Activated CD4-positive, alpha-beta memory T cell treated with anti-CD3 and anti-CD28 coated beads, Interleukin-2, amount 10 ng/mL, durations not matched to agents 7 days and 5 days (primary cell): ENCODE measurements at regions of chr16 and their contacts with region 1.

Region 1: DNA sequence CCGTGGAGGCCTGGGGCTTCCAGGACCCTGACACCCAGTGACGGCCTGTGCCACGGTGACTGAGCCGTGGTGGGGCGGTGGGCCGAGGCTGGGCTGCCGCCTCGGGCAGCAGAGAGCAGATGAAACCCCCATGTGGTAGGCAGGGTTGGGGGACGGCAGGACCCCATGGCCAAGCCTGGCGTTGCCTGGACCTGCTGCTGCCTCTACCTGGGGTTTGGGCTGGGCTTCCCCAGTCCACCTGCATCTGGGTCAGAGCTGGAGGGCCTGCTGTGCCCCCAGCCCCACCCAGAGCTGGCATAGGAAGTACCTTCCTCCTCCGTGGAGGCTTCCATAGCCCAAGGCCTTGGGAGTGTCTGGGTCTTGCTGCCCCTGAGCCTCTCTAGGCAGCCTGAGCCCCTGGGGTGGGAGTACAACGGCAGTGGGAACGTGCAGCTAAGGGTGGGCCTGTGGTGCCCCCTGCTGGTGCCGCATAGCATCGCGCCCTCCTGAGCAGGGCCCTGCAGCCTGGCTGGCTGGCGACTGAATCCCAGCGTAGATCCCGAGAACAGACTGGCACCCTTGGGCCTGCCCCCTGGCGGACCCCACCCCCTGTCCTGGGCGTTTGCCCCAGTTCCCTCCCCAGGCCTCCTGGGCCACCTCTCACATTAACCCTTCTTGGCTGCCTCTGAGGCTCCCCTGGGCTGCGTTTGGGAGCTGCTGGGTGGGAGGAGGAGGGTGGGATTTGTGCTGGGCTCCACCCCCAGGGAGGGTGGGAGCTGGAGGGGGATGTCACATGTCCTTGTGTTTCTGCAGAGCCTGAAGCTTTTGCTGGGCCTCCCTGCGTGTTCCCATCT is 12.6 kb upstream of the ATP6V0C start:
- DNase-seq: peak; percentile 82
- H3K4me3 Mint-ChIP-seq: no peak overlapping the region
- H3K27ac Mint-ChIP-seq: no peak overlapping the region
- H3K4me1 Mint-ChIP-seq: no peaks in the 10 kb centered on the region
- H3K27me3 Mint-ChIP-seq: no peaks in the 10 kb centered on the region

Region 2: DNA sequence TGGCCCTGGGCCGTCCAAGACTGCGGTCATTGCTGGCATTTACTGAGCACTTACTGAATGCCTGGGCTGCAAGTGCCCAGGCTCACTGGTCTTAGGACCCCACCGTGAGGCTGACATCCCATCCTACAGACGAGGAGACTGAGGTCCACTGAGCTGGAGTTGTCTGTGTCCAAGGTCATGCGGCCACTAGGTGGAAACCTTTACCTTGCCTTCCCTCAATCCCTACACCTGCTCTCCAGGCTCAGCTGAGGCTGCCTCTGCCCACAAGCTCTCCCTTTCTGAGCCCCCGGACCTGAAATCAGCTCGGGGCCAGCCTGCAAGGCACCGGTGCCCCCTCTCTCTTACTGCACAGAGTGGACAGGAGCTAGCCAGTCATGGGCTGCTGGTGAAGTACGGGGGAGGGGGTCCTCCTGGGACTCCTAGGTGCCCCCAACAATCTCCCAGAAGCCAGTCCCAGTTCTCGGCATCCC is 306.2 kb before region 1 on chr16:
- CTCF ChIA-PET with region 1: interaction called, 12 read pairs
- POLR2A ChIA-PET with region 1: no interaction called
- DNase-seq: peak; percentile 55
- H3K4me3 Mint-ChIP-seq: no peak overlapping the region
- H3K27ac Mint-ChIP-seq: no peak overlapping the region
- H3K4me1 Mint-ChIP-seq: peaks cover 3% of the 10 kb centered on the region
- H3K27me3 Mint-ChIP-seq: peaks cover 43% of the 10 kb centered on the region

Region 3: DNA sequence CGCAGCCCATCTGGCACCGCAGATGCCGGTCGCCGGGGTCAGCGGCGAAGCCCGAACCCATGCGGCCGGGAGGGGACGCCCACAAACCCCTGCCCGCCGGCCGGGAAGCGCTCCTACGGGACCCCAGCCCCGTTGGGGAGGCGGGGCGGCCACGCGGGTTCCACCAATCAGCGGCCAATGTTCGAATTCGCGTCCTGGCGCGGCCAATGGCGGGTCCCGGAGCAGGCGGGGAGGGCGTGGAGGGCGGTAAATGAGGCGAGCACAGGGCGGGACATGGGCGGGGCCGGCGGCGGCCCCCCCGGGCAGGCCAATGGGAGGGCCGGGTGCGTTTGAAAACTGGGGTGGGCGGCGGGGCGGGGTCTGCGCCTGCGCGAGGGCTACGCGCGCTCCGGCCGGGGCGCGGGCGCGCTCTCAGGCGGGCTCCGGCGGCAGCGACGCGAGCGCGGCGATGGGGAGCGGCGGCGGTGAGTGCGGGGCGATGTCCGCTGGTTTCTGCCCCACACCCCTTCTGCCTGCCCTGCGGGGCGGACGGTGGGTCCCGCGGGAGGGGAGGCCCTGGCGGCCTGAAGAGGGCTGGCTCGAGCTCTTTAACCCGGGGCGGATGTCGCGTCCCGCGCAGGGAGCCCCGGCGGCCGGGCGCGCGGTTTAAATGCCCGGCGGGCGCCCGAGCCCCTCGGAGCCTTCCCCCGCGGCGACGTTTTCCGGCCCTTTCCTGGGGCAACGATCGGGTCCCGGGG is 71.9 kb before region 1 on chr16 and contains the start of gene CCNF:
- CTCF ChIA-PET with region 1: interaction called, 11 read pairs
- POLR2A ChIA-PET with region 1: interaction called, 5 read pairs
- DNase-seq: peak; percentile 98
- H3K4me3 Mint-ChIP-seq: peak within 1 kb of the TSS; percentile 90
- H3K27ac Mint-ChIP-seq: peak within 1 kb of the TSS; percentile 73
- H3K4me1 Mint-ChIP-seq: peaks cover 36% of the 10 kb centered on the region
- H3K27me3 Mint-ChIP-seq: no peaks in the 10 kb centered on the region
- total RNA-seq, gene CCNF: 74.5 to 75.8 TPM

Region 4: GRCh38 chr16:2447920-2448583 is 53.1 kb before region 1 on chr16:
- CTCF ChIA-PET with region 1: no interaction called
- POLR2A ChIA-PET with region 1: no interaction called
- DNase-seq: no peak
- H3K4me3 Mint-ChIP-seq: no peak overlapping the region
- H3K27ac Mint-ChIP-seq: no peak overlapping the region
- H3K4me1 Mint-ChIP-seq: no peaks in the 10 kb centered on the region
- H3K27me3 Mint-ChIP-seq: no peaks in the 10 kb centered on the region

Region 5: DNA sequence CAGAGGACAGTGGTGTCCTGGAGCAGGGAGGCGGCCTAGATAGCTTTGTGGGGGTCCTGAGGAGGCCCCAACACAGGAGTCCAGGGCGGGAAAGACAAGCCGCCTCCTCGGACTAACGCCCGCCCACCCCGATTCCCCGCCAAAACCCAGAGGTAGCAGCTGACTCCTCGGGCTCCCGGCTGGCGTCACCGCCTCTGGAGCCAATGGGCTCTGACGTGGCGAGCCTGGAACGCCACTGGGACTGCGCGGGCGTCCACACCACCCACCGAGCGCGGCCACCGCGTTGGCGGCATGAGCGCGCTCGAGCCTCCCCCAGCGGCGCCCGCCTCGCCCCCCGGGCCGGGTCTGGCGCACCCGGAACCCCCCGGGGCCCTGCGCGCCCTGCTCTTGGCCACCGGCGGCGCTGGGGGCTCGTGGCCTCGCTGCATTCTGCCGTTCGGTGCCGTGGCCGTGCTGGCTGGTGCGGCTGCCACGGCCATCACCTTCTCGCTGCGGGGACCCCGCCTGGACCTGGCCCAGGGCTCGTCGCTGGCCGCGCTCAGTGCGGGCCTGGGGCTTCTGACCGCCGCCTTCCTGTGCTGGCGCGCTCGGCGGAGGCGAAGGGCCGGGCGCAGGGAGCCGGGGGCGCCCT is 33.5 kb before region 1 on chr16:
- CTCF ChIA-PET with region 1: no interaction called
- POLR2A ChIA-PET with region 1: no interaction called
- DNase-seq: no peak
- H3K4me3 Mint-ChIP-seq: no peak overlapping the region
- H3K27ac Mint-ChIP-seq: no peak overlapping the region
- H3K4me1 Mint-ChIP-seq: peaks cover 4% of the 10 kb centered on the region
- H3K27me3 Mint-ChIP-seq: peaks cover 36% of the 10 kb centered on the region